Breast epithelium (tissue), 4 donors: ENCODE measurements at regions of chr9 and their contacts with region 1.

Region 1: DNA sequence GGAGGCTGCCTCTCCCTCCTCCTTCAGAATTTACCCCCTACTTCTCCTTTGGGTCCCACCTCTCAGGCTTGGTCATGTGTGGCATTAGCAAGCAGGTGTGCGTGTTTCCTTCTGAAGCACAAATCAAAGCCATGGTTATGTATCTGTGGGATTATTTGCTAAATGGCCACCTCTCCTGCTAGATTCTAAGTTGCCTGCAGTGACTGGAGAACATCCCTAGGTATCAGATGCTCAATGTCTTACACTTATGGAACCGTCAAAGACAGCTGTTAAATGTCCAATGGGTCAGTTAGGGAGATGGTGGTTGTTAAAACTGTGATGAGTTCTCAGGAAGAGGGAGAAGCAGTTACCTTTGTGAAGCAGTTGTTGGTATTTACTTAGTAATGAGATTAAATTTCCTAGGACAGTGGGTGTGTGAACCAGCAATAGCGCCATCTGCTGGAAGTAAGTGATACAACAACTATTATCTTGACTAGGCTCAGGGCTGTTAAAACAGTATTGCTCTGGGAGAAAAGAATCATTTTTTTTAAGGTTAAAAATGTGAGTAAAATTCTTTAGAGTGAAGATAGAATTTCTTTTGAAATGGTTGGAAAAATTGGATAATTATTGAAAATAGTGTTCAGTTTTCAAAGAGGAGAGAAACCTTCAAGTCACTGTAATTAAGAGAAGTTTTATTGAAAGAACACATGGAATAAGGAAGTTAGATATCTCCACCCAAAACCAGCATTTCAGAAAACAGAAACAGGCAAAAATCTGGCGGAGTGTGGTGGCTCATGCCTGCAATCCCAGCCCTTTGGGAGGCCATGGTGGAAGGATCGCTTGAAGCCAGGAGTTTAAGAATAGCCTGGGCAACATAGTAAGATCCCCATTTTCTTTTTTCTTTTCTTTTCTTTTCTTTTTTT is 71.3 kb downstream of the TMC1 start:
- DNase-seq: no peak
- H3K4me3 ChIP-seq: no peak overlapping the region
- H3K27ac ChIP-seq: no peak overlapping the region
- H3K4me1 ChIP-seq: no peaks in the 10 kb centered on the region
- H3K27me3 ChIP-seq: no peaks in the 10 kb centered on the region
- CTCF ChIP-seq: peak; percentile 90 to 93 (median 93)
- POLR2A ChIP-seq: no peak

Region 2: DNA sequence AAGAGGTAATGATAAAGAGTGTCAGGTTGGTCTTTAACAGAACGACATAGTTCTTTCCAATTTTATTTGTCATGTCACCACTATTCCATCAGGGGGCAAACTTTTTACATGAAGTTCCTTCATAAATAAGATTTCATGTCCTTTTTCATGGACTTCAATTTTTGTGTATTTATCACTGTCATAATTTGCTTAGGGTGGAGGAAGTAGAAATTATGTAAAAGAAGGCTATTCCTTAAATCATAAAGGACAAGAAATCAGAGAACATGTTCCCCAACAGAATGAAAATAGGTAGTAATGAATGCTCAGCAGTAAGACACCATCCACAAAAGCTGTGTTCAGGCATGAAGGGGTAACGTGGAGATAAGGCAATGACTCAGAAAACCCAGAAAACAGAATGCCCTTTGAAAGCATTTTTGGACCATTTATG is 300.5 kb before region 1 on chr9:
- intact Hi-C with region 1: loop called (anchors 10 kb)
- DNase-seq: no peak
- H3K4me3 ChIP-seq: no peak overlapping the region
- H3K27ac ChIP-seq: no peak overlapping the region
- H3K4me1 ChIP-seq: no peaks in the 10 kb centered on the region
- H3K27me3 ChIP-seq: no peaks in the 10 kb centered on the region
- CTCF ChIP-seq: peak; percentile 62 to 72 (median 64)
- POLR2A ChIP-seq: no peak

Region 3: DNA sequence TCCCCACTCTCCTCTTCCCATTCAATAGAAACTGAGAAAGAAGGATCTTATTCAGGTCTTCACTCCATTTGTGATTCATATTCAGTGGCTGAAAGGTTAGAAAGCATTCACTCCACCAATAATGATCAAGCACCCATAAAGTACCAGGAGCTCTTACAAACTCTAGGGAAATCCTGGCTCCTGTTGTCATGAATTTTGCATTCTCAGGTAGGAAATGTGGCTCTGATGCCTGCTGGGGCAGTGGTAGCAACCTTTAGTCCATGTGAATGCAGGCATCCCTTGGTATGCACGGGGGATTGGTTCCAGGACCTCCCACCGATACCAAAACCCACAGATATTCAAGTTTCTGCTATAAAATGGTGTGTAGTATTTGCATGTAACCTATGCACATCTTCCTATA is 1900.8 kb after region 1 on chr9:
- intact Hi-C with region 1: no loop called
- DNase-seq: no peak
- H3K4me3 ChIP-seq: no peak overlapping the region
- H3K27ac ChIP-seq: no peak overlapping the region
- H3K4me1 ChIP-seq: no peaks in the 10 kb centered on the region
- H3K27me3 ChIP-seq: peaks cover 0 to 5% of the 10 kb centered on the region in 2 donors
- CTCF ChIP-seq: no peak
- POLR2A ChIP-seq: no peak